ENCODE measurements at regions of chr19 and their contacts with region 1.

Region 1: DNA sequence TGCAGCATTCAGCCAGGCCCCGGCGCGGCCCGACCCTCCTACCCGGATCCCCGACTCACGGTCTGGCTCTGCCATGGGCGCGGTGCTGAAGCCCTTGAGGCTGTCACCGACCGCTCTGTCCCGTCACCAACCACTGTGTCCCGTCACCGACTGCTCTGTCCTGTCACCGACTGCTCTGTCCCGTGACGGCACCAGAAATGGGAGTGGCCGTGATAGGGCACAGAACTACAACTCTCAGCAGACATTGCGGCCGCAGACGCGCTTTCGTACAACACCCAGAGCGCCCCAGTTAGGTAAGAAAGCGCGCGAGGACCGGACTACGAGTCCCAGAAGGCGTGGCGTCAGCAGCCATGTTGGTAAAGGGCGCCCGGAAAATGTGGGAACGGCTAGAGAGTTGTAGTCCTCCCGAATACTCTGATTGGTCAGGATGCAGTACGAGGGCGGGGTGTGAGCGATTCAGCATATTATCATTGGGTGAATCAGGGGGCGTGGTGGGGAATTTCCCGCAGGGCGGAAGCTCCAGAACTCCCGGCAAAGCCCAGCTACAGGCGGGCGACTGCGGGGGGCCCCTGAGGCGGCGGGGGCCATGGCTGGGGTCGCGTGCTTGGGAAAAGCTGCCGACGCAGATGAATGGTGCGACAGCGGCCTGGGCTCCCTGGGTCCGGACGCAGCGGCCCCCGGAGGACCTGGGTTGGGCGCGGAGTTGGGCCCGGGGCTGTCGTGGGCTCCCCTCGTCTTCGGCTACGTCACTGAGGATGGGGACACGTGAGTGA is at the starts of genes NFKBIB and SIRT2:
- DNase-seq: peak; percentile 100
- H3K4me3 ChIP-seq: peak within 1 kb of the TSS; percentile 89 to 94
- H3K27ac ChIP-seq: peak within 1 kb of the TSS; percentile 94
- H3K4me1 ChIP-seq: peaks cover 6 to 20% of the 10 kb centered on the region in 2 donors
- H3K27me3 ChIP-seq: no peaks in the 10 kb centered on the region
- CTCF ChIP-seq: no peak
- total RNA-seq, gene NFKBIB: 6.3 TPM
- total RNA-seq, gene SIRT2: 53.1 TPM

Region 2: DNA sequence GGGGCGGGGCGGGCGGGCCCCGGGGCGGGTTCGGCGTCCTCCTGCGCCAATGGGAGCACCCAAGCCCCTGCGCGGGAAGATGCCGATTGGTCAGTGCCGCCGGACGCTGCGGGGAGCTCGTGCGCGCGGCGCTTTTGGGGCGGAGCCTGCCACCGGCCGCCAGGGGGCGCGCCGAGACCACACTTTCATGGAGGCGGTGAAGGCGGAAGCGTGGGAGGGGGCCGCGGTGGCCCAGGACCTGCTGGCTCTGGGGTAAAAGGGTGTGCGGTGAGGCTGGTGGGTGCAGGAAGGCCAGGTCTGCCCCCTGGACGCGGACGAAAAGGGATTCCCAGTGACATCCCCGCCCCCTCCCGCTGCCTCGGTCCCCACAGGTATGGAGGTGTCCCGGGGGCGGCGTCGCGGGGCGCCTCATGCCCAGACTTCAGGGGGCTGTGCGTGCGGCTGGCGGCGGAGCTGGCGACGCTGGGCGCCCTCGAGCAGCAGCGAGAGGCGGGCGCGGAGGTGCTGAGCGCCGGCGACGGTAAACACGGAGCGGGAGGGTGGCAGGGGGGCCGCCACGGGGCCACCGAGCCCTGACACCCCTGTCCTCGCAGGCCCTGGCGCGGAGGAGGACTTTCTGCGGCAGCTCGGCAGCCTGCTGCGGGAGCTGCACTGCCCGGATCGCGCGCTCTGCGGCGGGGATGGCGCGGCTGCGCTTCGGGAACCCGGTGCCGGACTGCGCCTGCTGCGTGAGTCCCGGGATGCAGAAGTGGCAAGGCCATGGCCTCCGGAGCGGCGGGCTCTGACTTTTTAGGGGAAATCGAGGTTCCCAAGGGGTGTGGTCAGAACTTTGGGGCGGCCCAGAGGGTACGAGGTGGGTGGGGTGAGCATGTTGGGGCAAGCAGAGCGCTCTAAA is 496.4 kb before region 1 on chr19 and contains the start of gene FAM98C:
- intact Hi-C with region 1: loop called (anchors 5 kb)
- DNase-seq: peak; percentile 92 to 99
- H3K4me3 ChIP-seq: peak within 1 kb of the TSS; percentile 93
- H3K27ac ChIP-seq: peak within 1 kb of the TSS; percentile 72 to 73
- H3K4me1 ChIP-seq: peaks cover 0 to 11% of the 10 kb centered on the region in 2 donors
- H3K27me3 ChIP-seq: no peaks in the 10 kb centered on the region
- CTCF ChIP-seq: peak; percentile 95 to 97 (median 96)
- total RNA-seq, gene FAM98C: 11.1 TPM

Region 3: GRCh38 chr19:38544034-38544958 is 355.3 kb before region 1 on chr19:
- intact Hi-C with region 1: loop called (anchors 10 kb)
- DNase-seq: peak; percentile 77 to 80
- H3K4me3 ChIP-seq: peak overlapping the region in 1 of 2 donors; percentile 40
- H3K27ac ChIP-seq: peak overlapping the region in 1 of 2 donors; percentile 12
- H3K4me1 ChIP-seq: peaks cover 0 to 12% of the 10 kb centered on the region in 2 donors
- H3K27me3 ChIP-seq: no peaks in the 10 kb centered on the region
- CTCF ChIP-seq: peak; percentile 46 to 67 (median 55)

Region 4: DNA sequence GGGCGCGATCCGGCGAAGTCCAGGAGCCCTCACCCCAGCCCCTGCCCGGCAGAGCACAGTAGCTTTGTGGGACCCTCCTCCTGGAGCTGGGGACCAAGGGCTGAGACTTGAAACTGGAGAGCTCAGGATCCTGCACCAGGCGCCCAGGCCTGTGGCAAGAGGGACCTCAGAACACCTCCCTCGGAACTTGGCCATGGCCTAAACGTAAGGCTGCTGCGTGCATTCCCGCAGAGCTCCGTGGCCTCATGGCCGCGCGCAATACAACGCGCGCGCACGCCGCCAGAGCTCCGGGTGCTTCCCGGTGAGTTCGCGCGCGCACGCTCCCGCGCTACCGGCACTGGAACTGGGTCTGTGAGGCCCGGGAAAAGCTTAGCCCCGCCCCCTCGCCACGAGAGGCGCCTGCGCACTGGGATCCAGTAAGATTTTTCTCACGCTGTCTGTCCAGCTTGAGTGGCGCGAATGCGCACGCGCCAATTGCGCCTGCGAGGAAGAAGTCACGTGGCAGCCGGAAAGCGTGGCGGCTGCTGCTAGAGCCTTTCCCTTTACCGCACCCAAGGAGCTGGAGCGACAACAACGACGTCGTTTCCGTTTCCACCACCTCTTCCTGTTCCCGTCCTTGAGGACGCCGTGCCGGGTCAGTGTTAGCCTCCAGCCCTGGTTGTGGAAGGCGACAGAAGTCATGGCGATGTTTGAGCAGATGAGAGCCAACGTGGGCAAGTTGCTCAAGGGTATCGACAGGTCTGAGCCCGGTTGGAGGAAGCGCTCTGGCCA is 280.9 kb before region 1 on chr19 and contains the start of gene EIF3K:
- intact Hi-C with region 1: loop called (anchors 1 kb)
- DNase-seq: peak; percentile 97 to 99
- H3K4me3 ChIP-seq: peak within 1 kb of the TSS; percentile 75 to 91
- H3K27ac ChIP-seq: peak within 1 kb of the TSS; percentile 87 to 88
- H3K4me1 ChIP-seq: peaks cover 9 to 10% of the 10 kb centered on the region in 2 donors
- H3K27me3 ChIP-seq: no peaks in the 10 kb centered on the region
- CTCF ChIP-seq: no peak
- total RNA-seq, gene EIF3K: 696 TPM

Region 5: GRCh38 chr19:38831142-38831605 is 68.5 kb before region 1 on chr19:
- intact Hi-C with region 1: loop called (anchors 1 kb)
- DNase-seq: peak; percentile 45 to 89
- H3K4me3 ChIP-seq: peak overlapping the region; percentile 71 to 77
- H3K27ac ChIP-seq: peak overlapping the region; percentile 82 to 91
- H3K4me1 ChIP-seq: peaks cover 6 to 25% of the 10 kb centered on the region in 2 donors
- H3K27me3 ChIP-seq: no peaks in the 10 kb centered on the region
- CTCF ChIP-seq: no peak

Region 6: DNA sequence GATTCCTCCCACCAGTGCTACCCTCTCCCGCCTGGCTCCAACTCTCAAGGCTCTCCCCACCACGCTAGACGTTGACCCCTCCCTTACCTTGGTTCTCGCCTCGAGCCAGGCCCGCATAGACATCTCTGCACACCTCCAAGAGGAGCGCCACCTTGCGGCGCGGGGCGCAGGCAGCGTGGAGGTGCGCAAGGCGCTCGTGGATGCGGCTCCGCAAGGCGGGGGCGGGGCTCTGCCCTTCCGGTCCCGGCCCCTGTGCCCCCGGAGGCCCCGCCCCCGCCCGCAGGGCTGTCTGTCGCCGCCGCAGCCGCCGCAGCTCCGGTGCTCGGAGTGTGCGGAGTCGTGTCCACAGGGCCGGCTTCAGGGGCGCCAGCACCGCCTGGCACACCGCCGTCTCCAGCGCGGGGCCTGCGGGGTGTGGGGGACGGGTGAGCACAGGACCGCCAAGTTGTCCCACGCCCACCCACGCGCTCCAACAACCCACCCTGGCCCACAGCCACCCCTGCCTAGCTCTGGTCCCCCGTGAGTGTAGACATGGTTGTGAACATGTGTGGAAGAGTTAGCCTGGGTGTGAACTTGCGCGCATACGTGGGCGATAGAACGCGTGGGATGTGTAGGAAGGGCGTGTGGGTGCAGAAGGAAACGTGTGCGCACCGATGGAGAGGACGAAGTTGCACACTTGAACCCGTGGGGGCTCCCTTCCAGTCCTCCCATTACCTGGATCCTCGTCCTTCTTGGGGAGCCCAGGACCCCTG is 29.6 kb before region 1 on chr19:
- intact Hi-C with region 1: loop called (anchors 2 kb)
- DNase-seq: peak in 1 of 2 donors; percentile 93
- H3K4me3 ChIP-seq: peak overlapping the region; percentile 40 to 77
- H3K27ac ChIP-seq: no peak overlapping the region
- H3K4me1 ChIP-seq: peaks cover 5 to 9% of the 10 kb centered on the region in 2 donors
- H3K27me3 ChIP-seq: no peaks in the 10 kb centered on the region
- CTCF ChIP-seq: peak; percentile 81 to 89 (median 86)

Region 7: GRCh38 chr19:38929929-38930775 is 30.5 kb after region 1 on chr19 and contains the start of gene SARS2:
- intact Hi-C with region 1: loop called (anchors 1 kb)
- DNase-seq: peak; percentile 62 to 97
- H3K4me3 ChIP-seq: peak within 1 kb of the TSS; percentile 83 to 93
- H3K27ac ChIP-seq: peak within 1 kb of the TSS; percentile 70 to 77
- H3K4me1 ChIP-seq: peaks cover 9 to 14% of the 10 kb centered on the region in 2 donors
- H3K27me3 ChIP-seq: no peaks in the 10 kb centered on the region
- CTCF ChIP-seq: peak; percentile 98 to 99 (median 98)
- total RNA-seq, gene SARS2: 1.4 TPM